ENCODE measurements at regions of chr10 and their contacts with region 1.

Region 1: DNA sequence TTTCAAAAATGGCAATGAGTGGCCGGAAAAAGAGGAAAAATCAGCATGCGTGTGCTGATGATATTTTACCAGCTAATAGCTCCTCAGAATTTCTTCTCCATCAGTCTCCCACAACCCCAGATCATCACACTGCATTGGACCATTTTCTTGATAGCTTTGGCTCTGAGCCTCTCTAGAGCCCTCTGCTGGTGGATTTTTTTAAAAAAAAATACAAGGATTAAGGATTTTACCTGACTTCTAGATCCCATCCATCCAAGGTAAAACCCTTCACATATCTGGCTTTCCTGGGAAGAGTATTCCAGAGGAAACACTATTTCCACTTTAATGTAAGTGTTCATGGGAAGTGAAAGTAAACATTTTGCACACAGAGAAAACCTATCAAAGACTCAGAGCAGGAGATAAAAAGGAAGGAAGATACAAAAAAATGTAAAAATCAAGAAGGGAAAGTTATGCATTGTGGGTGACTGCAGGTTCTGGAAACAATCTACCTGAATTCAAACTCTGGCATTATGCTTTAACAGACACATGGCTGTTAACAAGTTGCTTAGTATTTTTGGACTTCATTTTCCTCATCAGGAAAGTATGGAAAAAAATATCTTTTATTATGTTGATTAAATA is 380.9 kb downstream of the LRRTM3 start:
- DNase-seq: peak in 1 of 2 experiments; percentile 69
- H3K4me3 ChIP-seq: no peak overlapping the region
- H3K4me3 Mint-ChIP-seq: no peak overlapping the region
- H3K27ac Mint-ChIP-seq: no peak overlapping the region
- H3K4me1 ChIP-seq: no peaks in the 10 kb centered on the region
- H3K4me1 Mint-ChIP-seq: no peaks in the 10 kb centered on the region
- H3K27me3 ChIP-seq: no peaks in the 10 kb centered on the region
- H3K27me3 Mint-ChIP-seq: no peaks in the 10 kb centered on the region
- CTCF ChIP-seq: peak; percentile 72 to 89

Region 2: DNA sequence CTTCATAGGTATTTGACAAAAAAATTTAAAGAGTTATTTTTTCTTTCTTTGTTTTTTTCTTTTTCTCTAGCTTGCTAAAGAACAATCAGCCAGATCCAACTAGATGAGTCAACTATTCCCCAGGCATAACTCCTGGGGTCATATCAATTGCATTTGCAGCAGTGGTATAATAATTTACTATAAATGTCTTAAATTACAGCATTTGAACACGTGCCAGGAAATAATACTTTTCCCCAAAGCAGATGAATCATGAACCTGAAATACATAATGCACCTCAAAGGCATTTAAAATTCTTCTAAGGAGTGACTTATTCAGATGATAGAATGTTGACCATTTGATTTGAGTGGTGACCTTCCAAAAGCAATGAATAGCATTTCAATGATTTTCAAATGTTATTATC is 190.7 kb before region 1 on chr10:
- CTCF ChIA-PET with region 1: no interaction called
- POLR2A ChIA-PET with region 1: no interaction called
- intact Hi-C with region 1: loop called (anchors 5 kb)
- DNase-seq: no peak
- H3K4me3 ChIP-seq: no peak overlapping the region
- H3K4me3 Mint-ChIP-seq: no peak overlapping the region
- H3K27ac Mint-ChIP-seq: no peak overlapping the region
- H3K4me1 ChIP-seq: peaks cover 10% of the 10 kb centered on the region
- H3K4me1 Mint-ChIP-seq: peaks cover 9% of the 10 kb centered on the region
- H3K27me3 ChIP-seq: no peaks in the 10 kb centered on the region
- H3K27me3 Mint-ChIP-seq: no peaks in the 10 kb centered on the region
- CTCF ChIP-seq: no peak

Region 3: GRCh38 chr10:67242528-67242927 is 64.2 kb before region 1 on chr10:
- CTCF ChIA-PET with region 1: no interaction called
- POLR2A ChIA-PET with region 1: no interaction called
- intact Hi-C with region 1: loop called (anchors 5 kb)
- DNase-seq: no peak
- H3K4me3 ChIP-seq: no peak overlapping the region
- H3K4me3 Mint-ChIP-seq: no peak overlapping the region
- H3K27ac Mint-ChIP-seq: no peak overlapping the region
- H3K4me1 ChIP-seq: peaks cover 14% of the 10 kb centered on the region; the same call in 1 of the 2 replicates
- H3K4me1 Mint-ChIP-seq: peaks cover 15% of the 10 kb centered on the region
- H3K27me3 ChIP-seq: no peaks in the 10 kb centered on the region
- H3K27me3 Mint-ChIP-seq: no peaks in the 10 kb centered on the region
- CTCF ChIP-seq: no peak

Region 4: GRCh38 chr10:67259319-67259929 is 47.3 kb before region 1 on chr10:
- CTCF ChIA-PET with region 1: interaction called, 9 read pairs
- POLR2A ChIA-PET with region 1: no interaction called
- intact Hi-C with region 1: loop called (anchors 2 kb)
- DNase-seq: peak; percentile 43 to 68
- H3K4me3 ChIP-seq: no peak overlapping the region
- H3K4me3 Mint-ChIP-seq: peak overlapping the region; percentile 51
- H3K27ac Mint-ChIP-seq: peak overlapping the region; percentile 37
- H3K4me1 ChIP-seq: peaks cover 48% of the 10 kb centered on the region
- H3K4me1 Mint-ChIP-seq: peaks cover 44% of the 10 kb centered on the region
- H3K27me3 ChIP-seq: no peaks in the 10 kb centered on the region
- H3K27me3 Mint-ChIP-seq: no peaks in the 10 kb centered on the region
- CTCF ChIP-seq: no peak

Region 5: DNA sequence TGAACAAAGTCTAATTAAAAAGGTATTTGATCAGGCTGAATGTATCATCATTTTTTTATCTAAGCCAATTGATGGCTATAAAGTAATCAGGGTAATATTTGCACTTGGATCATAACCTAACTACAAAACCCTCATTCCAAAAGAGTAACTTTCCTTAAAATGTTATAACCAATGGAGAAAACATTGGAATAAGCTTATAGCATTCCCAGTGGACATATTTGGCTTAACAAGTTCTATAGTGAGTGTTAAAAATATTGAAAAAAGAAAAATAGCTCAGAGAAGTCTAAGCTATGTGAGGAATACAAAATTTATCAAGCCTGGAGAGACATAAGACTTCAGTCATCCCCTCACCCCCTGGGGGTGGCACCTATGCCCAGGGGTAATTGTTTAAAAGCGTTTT is 22.1 kb before region 1 on chr10:
- CTCF ChIA-PET with region 1: no interaction called
- POLR2A ChIA-PET with region 1: no interaction called
- intact Hi-C with region 1: loop called (anchors 1 kb)
- DNase-seq: no peak
- H3K4me3 ChIP-seq: no peak overlapping the region
- H3K4me3 Mint-ChIP-seq: no peak overlapping the region
- H3K27ac Mint-ChIP-seq: no peak overlapping the region
- H3K4me1 ChIP-seq: peaks cover 46% of the 10 kb centered on the region
- H3K4me1 Mint-ChIP-seq: peaks cover 36% of the 10 kb centered on the region
- H3K27me3 ChIP-seq: no peaks in the 10 kb centered on the region
- H3K27me3 Mint-ChIP-seq: no peaks in the 10 kb centered on the region
- CTCF ChIP-seq: peak in 1 of 2 experiments; percentile 21

Measured in Caco-2 (cell line).